IMR-90 (cell line): ENCODE measurements at regions of chr11 and their contacts with region 1.

Region 1: GRCh38 chr11:120608760-120609211 is 97.2 kb downstream of the GRIK4 start:
- DNase-seq: no peak
- ATAC-seq: no peak; the same call in 1 of the 2 replicates
- H3K4me3 ChIP-seq: no peak overlapping the region
- H3K27ac ChIP-seq: no peak overlapping the region
- H3K4me1 ChIP-seq: peaks cover 14% of the 10 kb centered on the region; the same call in 1 of the 2 replicates
- H3K27me3 ChIP-seq: no peaks in the 10 kb centered on the region; the same call in 1 of the 2 replicates
- CTCF ChIP-seq: no peak
- POLR2A ChIP-seq: no peak
- RAD21 ChIP-seq: no peak

Region 2: GRCh38 chr11:120801801-120802689 is 193.3 kb after region 1 on chr11:
- CTCF ChIA-PET with region 1: no interaction called
- POLR2A ChIA-PET with region 1: no interaction called
- dilution Hi-C with region 1: no loop called
- in situ Hi-C with region 1: no loop called
- intact Hi-C with region 1: loop called (anchors 10 kb)
- DNase-seq: peak; percentile 50
- ATAC-seq: peak; percentile 97
- H3K4me3 ChIP-seq: no peak overlapping the region
- H3K27ac ChIP-seq: no peak overlapping the region
- H3K4me1 ChIP-seq: peaks cover under 1% of the 10 kb centered on the region; the same call in 1 of the 2 replicates
- H3K27me3 ChIP-seq: peaks cover 4% of the 10 kb centered on the region; the same call in 1 of the 2 replicates
- CTCF ChIP-seq: peak; percentile 72
- POLR2A ChIP-seq: no peak
- RAD21 ChIP-seq: peak; percentile 58